Activated T-helper 2 cell treated with anti-CD3 and anti-CD28 coated beads, Interferon-gamma antibody, Interleukin-2, Interleukin-4, amounts not matched to agents 10 μg/mL and 5 μg/mL and 100 μg/mL, durations not matched to agents 14 hours and 24 hours and 36 hours (primary cell): ENCODE measurements at regions of chr3 and their contacts with region 1.

Region 1: GRCh38 chr3:71130471-71131374 is 452.8 kb downstream of the FOXP1 start:
- DNase-seq: peak; percentile 66
- H3K4me3 Mint-ChIP-seq: peak overlapping the region; percentile 91
- H3K27ac Mint-ChIP-seq: peak overlapping the region; percentile 94
- H3K4me1 Mint-ChIP-seq: peaks cover 62% of the 10 kb centered on the region
- H3K27me3 Mint-ChIP-seq: no peaks in the 10 kb centered on the region

Region 2: GRCh38 chr3:71006810-71007785 is 123.6 kb before region 1 on chr3:
- intact Hi-C with region 1: loop called (anchors 2 kb)
- DNase-seq: no peak
- H3K4me3 Mint-ChIP-seq: no peak overlapping the region
- H3K27ac Mint-ChIP-seq: no peak overlapping the region
- H3K4me1 Mint-ChIP-seq: peaks cover 59% of the 10 kb centered on the region
- H3K27me3 Mint-ChIP-seq: no peaks in the 10 kb centered on the region

Region 3: GRCh38 chr3:71102111-71102983 is 28.4 kb before region 1 on chr3:
- intact Hi-C with region 1: loop called (anchors 1 kb)
- DNase-seq: no peak
- H3K4me3 Mint-ChIP-seq: no peak overlapping the region
- H3K27ac Mint-ChIP-seq: no peak overlapping the region
- H3K4me1 Mint-ChIP-seq: peaks cover 70% of the 10 kb centered on the region
- H3K27me3 Mint-ChIP-seq: no peaks in the 10 kb centered on the region

Region 4: DNA sequence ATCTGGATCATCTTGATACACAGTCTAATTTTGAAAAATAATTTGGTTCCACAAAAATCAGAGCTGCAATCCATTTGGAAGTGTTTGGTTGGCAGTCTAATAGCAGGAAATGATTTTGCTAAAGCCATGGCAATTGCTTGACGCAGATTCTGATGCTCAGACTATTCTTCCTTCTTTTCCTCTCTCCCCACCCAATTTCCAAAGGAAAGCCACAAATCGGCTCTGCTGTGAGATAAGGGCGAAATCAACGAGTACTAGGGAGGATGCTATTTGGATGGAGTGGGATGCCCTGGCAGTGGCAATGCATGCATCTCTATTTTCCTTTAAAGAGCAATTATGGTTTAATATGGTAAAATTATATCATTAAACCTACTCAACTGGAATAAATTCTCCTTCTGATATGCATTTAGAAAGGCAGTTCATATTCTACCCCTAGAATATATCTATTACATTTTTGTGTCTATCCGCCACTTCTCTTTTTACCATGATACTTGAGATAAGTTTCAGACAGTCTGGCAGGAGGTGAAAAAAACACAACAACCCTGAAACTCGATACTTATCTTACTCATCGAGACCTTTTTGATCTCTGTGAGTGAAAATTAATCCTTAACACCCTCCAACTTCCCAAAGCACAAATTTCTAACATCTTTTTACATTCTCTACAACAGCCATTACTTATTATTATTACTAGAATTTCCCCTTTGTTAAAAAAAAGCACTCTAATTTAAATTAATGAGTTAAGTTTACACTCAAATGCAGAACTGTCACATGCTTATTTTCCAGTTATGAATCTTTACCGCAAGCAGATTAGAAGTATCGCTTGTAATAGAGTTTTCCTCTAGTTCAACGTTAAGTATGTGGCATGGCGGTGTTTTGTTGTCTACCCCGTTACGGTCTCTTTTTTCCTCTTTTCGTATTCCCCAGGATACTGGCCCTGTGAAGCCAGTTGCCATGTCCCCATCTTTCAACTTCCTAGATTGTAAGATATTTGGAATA is 19.5 kb after region 1 on chr3:
- intact Hi-C with region 1: loop called (anchors 2 kb)
- DNase-seq: no peak
- H3K4me3 Mint-ChIP-seq: peak overlapping the region; percentile 3
- H3K27ac Mint-ChIP-seq: peak overlapping the region; percentile 71
- H3K4me1 Mint-ChIP-seq: peaks cover 40% of the 10 kb centered on the region
- H3K27me3 Mint-ChIP-seq: no peaks in the 10 kb centered on the region

Region 5: GRCh38 chr3:71226565-71227269 is 96.0 kb after region 1 on chr3:
- intact Hi-C with region 1: loop called (anchors 1 kb)
- DNase-seq: peak; percentile 86
- H3K4me3 Mint-ChIP-seq: peak overlapping the region; percentile 88
- H3K27ac Mint-ChIP-seq: peak overlapping the region; percentile 97
- H3K4me1 Mint-ChIP-seq: peaks cover 63% of the 10 kb centered on the region
- H3K27me3 Mint-ChIP-seq: peaks cover 1% of the 10 kb centered on the region

Region 6: GRCh38 chr3:71380096-71380495 is 249.4 kb after region 1 on chr3:
- intact Hi-C with region 1: loop called (anchors 5 kb)
- DNase-seq: no peak
- H3K4me3 Mint-ChIP-seq: no peak overlapping the region
- H3K27ac Mint-ChIP-seq: peak overlapping the region; percentile 68
- H3K4me1 Mint-ChIP-seq: peaks cover 56% of the 10 kb centered on the region
- H3K27me3 Mint-ChIP-seq: no peaks in the 10 kb centered on the region